ENCODE measurements at regions of chr4 and their contacts with region 1.

Region 1: DNA sequence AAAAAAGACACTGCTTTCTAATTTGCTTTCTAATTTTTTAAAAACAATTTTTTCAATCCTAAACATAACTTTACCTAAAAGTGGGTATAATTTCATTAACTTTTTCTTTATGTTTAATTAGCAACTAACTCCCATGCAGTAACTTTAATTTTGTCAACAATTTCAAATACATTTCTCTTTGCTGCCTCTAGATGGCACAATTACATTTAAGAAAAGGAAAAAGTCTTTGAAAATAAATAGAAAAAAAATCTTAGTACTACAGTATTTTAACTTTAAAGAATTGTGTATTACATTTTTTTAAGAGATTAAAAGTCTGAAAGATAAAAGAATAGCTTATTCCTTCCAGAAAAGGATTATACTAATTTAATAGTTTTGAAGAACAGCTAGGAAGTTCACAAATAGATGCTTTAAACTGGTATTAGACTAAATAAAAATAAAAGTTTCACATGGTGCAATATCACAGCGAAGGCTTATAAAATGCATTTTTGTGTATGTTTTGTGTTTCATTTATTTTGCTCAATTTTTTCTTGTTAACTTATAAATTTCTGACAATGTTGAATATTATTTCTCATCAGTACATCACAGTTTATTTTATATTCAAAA is 105.1 kb downstream of the ADGRA3 start:
- DNase-seq: no peak
- ATAC-seq: no peak

Region 2: DNA sequence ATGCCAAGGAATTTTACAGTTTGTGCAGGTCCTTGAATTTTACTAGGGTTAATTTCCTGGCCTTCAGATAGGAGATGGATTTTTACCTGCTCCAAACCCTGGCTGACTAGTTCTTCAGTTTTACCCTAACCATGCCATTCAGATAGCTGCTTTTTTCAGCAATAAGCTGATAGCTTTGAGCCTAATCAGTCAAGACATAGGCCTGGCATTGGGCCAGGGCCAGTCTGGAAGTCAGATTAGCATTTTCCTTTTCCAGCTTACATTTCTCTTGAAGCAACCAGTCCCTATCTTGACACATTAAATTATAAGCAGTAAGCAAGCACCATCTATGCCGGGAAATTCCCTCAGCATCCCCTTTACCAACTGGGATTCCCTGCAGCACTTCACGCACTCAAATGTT is 72.0 kb before region 1 on chr4:
- intact Hi-C with region 1: no loop called
- DNase-seq: peak; percentile 30
- ATAC-seq: no peak

Region 3: DNA sequence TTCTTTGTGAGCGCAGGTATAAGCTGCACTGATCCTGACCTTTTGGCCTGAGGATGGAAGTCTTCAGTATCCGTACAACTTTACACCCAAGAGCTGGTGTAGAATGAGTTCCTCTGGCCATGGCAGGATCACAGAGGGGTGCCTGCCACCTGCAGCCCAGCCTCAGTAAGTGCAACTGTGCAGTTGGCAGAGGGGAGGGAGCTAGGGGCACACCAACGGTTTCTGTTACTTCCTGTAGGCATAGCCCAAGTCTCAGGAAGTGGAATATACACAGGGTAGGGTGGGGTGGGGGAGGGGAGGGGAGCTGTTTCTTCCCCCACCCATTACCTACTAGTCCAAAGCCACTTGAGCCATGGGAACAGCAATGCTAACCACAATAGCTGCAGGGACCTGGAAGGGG is 196.6 kb after region 1 on chr4:
- intact Hi-C with region 1: loop called (anchors 2 kb)
- DNase-seq: peak; percentile 53
- ATAC-seq: peak; percentile 98

Region 4: DNA sequence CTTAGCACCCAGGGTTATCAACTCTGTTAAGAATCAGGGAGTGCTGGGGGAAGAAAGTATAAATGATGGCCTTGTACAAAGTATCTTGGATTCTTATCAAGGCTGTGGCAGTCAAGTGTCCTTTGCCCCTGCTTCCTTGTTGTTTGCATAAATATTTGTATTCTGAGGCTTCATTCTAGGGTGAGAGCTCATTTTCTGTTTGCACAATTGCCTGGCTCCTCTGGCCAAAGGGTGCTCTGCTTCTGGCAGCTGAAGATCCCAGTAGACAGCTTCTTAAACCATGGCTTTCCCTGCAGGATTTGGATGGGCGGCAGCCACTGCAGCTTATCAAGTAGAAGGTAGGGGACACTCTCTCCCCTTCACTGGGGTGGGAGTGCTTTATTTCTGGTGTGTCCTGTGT is 282.0 kb after region 1 on chr4 and contains the start of gene GBA3:
- intact Hi-C with region 1: loop called (anchors 5 kb)
- DNase-seq: no peak
- ATAC-seq: no peak
- total RNA-seq, gene GBA3: not detected

Measured in left ventricle myocardium superior (tissue), 1 donor.